A549 (cell line): ENCODE measurements at regions of chr9 and their contacts with region 1.

Region 1: GRCh38 chr9:124242331-124243194 is 15.2 kb upstream of the NEK6 start:
- DNase-seq: no peak
- ATAC-seq: peak in 1 of 2 experiments; percentile 30; a peak in 3 of 6 replicates
- H3K4me3 ChIP-seq: no peak overlapping the region
- H3K27ac ChIP-seq: no peak overlapping the region
- H3K4me1 ChIP-seq: no peaks in the 10 kb centered on the region
- CTCF ChIP-seq: no peak
- EP300 ChIP-seq: no peak
- POLR2A ChIP-seq: no peak
- RAD21 ChIP-seq: no peak

Region 2: GRCh38 chr9:124180557-124180956 is 62.0 kb before region 1 on chr9:
- CTCF ChIA-PET with region 1: no interaction called
- POLR2A ChIA-PET with region 1: no interaction called
- DNase-seq: no peak
- ATAC-seq: peak; percentile 26 to 54; a peak in 4 of 6 replicates
- H3K4me3 ChIP-seq: no peak overlapping the region
- H3K27ac ChIP-seq: no peak overlapping the region
- H3K4me1 ChIP-seq: no peaks in the 10 kb centered on the region
- CTCF ChIP-seq: no peak
- EP300 ChIP-seq: no peak
- POLR2A ChIP-seq: no peak
- RAD21 ChIP-seq: no peak

Region 3: DNA sequence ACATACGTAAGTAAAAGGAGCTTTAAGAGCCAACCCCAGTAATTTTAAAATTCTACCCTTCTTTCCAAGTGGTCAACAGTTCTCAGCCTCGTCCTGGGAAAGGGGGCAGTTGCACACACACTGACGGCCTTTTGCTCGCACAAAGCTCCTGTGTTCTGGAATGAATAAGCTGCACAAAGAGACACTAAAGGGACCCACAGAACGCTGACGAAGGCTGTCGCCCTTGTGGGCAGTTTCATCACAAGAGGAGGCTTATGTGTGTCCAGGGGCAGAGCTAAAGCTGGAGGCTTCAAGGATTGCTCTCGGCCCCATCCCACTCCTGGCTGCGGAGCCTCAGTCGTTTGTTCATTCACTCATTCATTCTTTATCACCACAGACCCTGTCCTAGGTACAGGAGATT is 51.8 kb before region 1 on chr9:
- CTCF ChIA-PET with region 1: no interaction called
- POLR2A ChIA-PET with region 1: interaction called, 11 read pairs
- DNase-seq: no peak
- ATAC-seq: no peak
- H3K4me3 ChIP-seq: no peak overlapping the region
- H3K27ac ChIP-seq: no peak overlapping the region
- H3K4me1 ChIP-seq: no peaks in the 10 kb centered on the region
- CTCF ChIP-seq: no peak
- EP300 ChIP-seq: no peak
- POLR2A ChIP-seq: no peak
- RAD21 ChIP-seq: no peak